K562 (cell line): ENCODE measurements at regions of chr3 and their contacts with region 1.

Region 1: DNA sequence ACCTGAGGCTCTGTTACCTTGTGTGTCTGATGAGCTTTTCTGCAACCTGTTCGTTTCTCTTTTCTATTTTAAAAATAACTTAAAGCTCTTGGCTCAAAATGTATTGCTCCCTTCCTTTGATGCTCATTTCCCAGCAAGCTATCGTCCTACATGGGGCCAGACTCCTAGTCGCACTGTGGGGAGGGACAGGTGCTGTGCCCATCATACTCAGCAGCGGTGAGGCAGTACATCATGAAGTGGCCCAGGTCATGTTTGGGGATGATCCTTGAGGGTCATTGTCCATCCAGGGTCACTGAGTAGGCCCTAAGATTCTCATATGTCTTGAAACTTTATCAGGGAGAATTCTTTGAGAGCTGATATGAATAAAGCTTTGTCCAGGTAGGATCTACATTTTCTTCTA is 41.1 kb downstream of the PTH1R start:
- DNase-seq: no peak
- ATAC-seq: no peak
- H3K4me3 ChIP-seq: no peak overlapping the region
- H3K27ac ChIP-seq: no peak overlapping the region
- H3K4me1 ChIP-seq: no peaks in the 10 kb centered on the region; a peak in 1 of 5 replicates
- H3K27me3 ChIP-seq: no peaks in the 10 kb centered on the region
- CTCF ChIP-seq: no peak
- EP300 ChIP-seq: no peak
- POLR2A ChIP-seq: 0 out of 2 replicates have a peak, but pooled peaks have one; percentile 9
- RAD21 ChIP-seq: no peak

Region 2: GRCh38 chr3:46935168-46935858 is 16.7 kb after region 1 on chr3:
- CTCF ChIA-PET with region 1: no interaction called
- POLR2A ChIA-PET with region 1: interaction called, 12 read pairs
- in situ Hi-C with region 1: no loop called
- intact Hi-C with region 1: no loop called
- DNase-seq: peak; percentile 84 to 88 (median 86)
- ATAC-seq: peak; percentile 81
- H3K4me3 ChIP-seq: no peak overlapping the region
- H3K27ac ChIP-seq: peak overlapping the region; percentile 42; the same call in 2 of the 3 replicates
- H3K4me1 ChIP-seq: peaks cover 39 to 40% of the 10 kb centered on the region in 2 experiments
- H3K27me3 ChIP-seq: no peaks in the 10 kb centered on the region
- CTCF ChIP-seq: peak; percentile 26 to 47 (median 44); a peak in 4 of 6 replicates
- EP300 ChIP-seq: peak; percentile 85
- POLR2A ChIP-seq: 0 out of 2 replicates have a peak, but pooled peaks have one; percentile 29
- RAD21 ChIP-seq: peak; percentile 14 to 31; a peak in 3 of 4 replicates